ENCODE measurements at regions of chr7 and their contacts with region 1.

Region 1: GRCh38 chr7:129218514-129219062 is 6.2 kb upstream of the AHCYL2 start:
- DNase-seq: peak; percentile 82
- H3K4me3 ChIP-seq: no peak overlapping the region
- H3K27ac ChIP-seq: no peak overlapping the region
- H3K4me1 ChIP-seq: peaks cover 15% of the 10 kb centered on the region
- CTCF ChIP-seq: peak; percentile 95

Region 2: DNA sequence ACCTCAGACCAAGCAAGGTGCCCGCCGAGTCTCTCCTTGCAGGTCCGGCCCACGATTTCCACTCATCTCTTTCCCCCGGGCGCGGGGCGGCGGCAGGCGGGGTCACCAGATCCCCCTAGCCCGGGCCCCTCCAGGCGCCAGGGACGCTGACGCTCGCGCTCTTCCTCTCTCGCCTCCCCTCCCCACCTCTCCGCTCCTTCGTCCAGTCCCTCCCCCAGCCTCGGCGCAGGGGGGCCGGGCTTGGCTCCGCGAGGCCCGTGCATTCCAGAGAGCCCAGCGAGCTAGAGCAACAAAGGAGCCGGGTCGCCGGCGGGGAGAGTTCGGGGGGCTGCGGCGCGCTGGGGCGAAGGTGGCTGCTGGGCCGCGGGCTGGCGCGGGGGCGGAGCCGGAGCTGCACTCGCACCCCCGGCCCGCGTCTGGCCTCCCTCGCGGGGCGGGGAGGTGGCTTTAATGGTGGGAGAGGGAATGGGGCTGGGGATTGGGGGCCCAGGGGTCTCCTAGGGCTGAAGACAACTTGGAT is 30.2 kb before region 1 on chr7 and contains the start of gene SMO:
- CTCF ChIA-PET with region 1: no interaction called
- POLR2A ChIA-PET with region 1: no interaction called
- intact Hi-C with region 1: no loop called
- DNase-seq: no peak
- H3K4me3 ChIP-seq: no peak within 1 kb of the TSS
- H3K27ac ChIP-seq: no peak within 1 kb of the TSS
- H3K4me1 ChIP-seq: peaks cover 14% of the 10 kb centered on the region
- CTCF ChIP-seq: no peak
- total RNA-seq, gene SMO: 0.25 TPM in 1 of 2 replicates, not detected in the other

Region 3: DNA sequence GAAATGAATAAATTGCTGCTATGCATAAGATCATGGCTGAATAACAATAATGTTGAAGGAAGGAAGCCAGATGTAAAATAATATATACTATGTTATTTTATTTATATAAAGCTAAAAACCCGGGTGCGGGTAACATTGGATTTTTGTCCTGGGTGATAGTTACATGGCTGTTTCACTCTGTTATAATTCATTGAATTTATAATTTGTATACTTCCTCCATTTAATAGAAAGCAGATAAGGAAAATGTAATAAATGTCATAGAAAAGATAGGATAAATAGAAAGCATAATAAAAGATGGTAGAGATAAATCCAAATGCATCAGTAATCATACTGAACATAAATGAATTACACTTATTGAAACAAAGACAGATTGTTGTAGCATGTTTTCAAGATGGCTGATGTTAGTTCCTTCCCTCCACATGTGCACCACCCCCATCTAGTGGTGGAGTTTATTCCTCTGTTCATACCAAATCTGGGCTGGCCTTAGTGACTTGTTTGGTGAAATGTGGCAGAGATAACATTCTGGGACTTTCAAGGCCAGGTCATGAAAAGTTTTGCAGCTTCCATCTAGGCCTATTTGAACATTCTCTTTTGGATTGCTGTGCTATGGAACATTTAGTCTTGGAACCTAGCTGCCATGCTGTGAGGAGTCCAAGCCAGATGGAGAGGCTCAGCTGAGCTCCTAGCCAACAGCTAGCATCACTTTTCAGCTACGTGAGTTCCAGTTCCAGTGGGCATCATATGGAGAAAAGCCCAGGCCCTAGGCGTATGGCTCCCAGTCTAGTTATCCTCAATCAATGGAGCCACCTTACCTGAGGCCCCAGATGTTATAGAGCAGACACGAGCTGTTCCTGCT is 53.1 kb after region 1 on chr7:
- CTCF ChIA-PET with region 1: no interaction called
- POLR2A ChIA-PET with region 1: interaction called, 3 read pairs
- intact Hi-C with region 1: loop called (anchors 1 kb)
- DNase-seq: peak; percentile 67
- H3K4me3 ChIP-seq: no peak overlapping the region
- H3K27ac ChIP-seq: no peak overlapping the region
- H3K4me1 ChIP-seq: no peaks in the 10 kb centered on the region
- CTCF ChIP-seq: peak; percentile 91

Region 4: DNA sequence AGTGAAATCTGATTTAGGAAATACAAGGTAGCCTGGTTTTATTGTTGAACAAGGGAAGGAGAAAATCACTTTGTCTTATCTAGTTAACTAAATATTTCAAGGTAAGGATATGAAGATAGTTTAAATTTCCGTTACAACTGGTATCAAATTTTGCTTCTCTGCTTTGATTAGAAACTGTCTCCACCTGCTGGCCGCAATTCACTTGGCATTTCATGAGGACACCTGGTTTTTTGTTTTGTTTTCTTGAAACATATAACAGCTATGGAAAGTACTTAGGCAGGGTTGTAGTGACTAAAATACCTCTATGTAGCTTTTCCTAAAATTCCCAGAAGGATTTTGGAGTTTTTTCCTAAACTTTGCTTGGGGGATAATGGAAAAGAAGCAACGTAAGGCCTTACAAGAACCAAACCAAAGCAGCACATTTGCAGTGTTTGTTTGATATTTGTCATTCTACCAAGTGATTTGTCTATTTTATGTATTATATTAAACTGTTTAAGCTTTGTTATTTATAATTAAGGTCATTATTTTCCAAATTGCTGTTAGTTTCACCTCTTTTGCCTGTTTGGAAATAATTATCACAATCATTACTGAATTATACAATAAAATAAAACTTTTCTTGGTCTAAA is 79.8 kb after region 1 on chr7:
- CTCF ChIA-PET with region 1: interaction called, 16 read pairs
- POLR2A ChIA-PET with region 1: interaction called, 4 read pairs
- intact Hi-C with region 1: loop called (anchors 1 kb)
- DNase-seq: peak; percentile 63
- H3K4me3 ChIP-seq: no peak overlapping the region
- H3K27ac ChIP-seq: no peak overlapping the region
- H3K4me1 ChIP-seq: no peaks in the 10 kb centered on the region
- CTCF ChIP-seq: peak; percentile 98

Region 5: GRCh38 chr7:129367700-129368388 is 149.3 kb after region 1 on chr7:
- CTCF ChIA-PET with region 1: no interaction called
- POLR2A ChIA-PET with region 1: interaction called, 4 read pairs
- intact Hi-C with region 1: loop called (anchors 5 kb)
- DNase-seq: peak; percentile 81
- H3K4me3 ChIP-seq: no peak overlapping the region
- H3K27ac ChIP-seq: no peak overlapping the region
- H3K4me1 ChIP-seq: peaks cover 12% of the 10 kb centered on the region
- CTCF ChIP-seq: peak; percentile 98

Region 6: GRCh38 chr7:129385116-129385515 is 166.5 kb after region 1 on chr7:
- CTCF ChIA-PET with region 1: no interaction called
- POLR2A ChIA-PET with region 1: no interaction called
- intact Hi-C with region 1: no loop called
- DNase-seq: no peak
- H3K4me3 ChIP-seq: no peak overlapping the region
- H3K27ac ChIP-seq: no peak overlapping the region
- H3K4me1 ChIP-seq: no peaks in the 10 kb centered on the region
- CTCF ChIP-seq: no peak

Region 7: GRCh38 chr7:129468087-129468486 is 249.5 kb after region 1 on chr7:
- CTCF ChIA-PET with region 1: no interaction called
- POLR2A ChIA-PET with region 1: no interaction called
- intact Hi-C with region 1: loop called (anchors 1 kb)
- DNase-seq: no peak
- H3K4me3 ChIP-seq: no peak overlapping the region
- H3K27ac ChIP-seq: no peak overlapping the region
- H3K4me1 ChIP-seq: no peaks in the 10 kb centered on the region
- CTCF ChIP-seq: no peak